ENCODE measurements at regions of chr5 and their contacts with region 1.

Region 1: DNA sequence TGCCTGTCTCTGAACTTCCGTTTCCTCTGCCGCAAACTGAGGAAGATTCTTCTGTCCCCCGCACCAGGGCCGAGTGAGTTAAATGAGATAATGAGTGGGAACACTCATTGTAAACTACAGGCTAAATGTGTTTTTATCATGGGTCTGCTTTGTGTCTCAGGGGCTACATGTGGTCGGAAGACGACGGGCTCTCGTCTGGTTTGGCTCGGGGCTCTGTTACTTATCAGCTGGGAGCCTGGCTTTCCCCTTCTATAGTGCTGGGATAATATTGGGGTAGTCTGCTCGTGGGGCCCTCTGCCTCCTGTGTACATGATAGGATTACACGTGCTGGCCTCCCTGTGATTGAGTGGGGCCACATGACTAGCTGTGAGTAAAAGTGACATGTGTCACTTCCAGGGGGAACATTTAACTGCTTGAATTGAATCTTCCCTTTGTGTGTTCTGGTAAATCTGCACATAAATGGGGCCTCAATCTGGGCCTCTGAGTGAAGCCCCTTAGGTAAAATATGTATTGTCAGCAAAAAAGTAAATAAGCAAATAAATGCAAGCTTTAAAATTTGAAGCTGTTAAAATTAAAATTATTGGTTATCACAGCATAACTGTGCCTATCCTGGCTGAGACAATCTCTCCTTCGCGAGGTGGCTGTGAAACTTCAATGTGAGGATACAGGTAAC is 86.9 kb upstream of the SH3PXD2B start:
- DNase-seq: no peak
- ATAC-seq: peak; percentile 18

Region 2: GRCh38 chr5:172641359-172642050 is 100.3 kb after region 1 on chr5:
- intact Hi-C with region 1: no loop called
- DNase-seq: no peak
- ATAC-seq: peak; percentile 11

Region 3: GRCh38 chr5:172833686-172834414 is 292.6 kb after region 1 on chr5 and contains the start of gene ERGIC1:
- intact Hi-C with region 1: loop called (anchors 10 kb)
- DNase-seq: peak; percentile 93
- ATAC-seq: peak; percentile 94
- total RNA-seq, gene ERGIC1: 75.5 TPM

Region 4: GRCh38 chr5:172920447-172920849 is 379.2 kb after region 1 on chr5:
- intact Hi-C with region 1: no loop called
- DNase-seq: no peak
- ATAC-seq: no peak